PC-9 (cell line): ENCODE measurements at regions of chr5 and their contacts with region 1.

Region 1: DNA sequence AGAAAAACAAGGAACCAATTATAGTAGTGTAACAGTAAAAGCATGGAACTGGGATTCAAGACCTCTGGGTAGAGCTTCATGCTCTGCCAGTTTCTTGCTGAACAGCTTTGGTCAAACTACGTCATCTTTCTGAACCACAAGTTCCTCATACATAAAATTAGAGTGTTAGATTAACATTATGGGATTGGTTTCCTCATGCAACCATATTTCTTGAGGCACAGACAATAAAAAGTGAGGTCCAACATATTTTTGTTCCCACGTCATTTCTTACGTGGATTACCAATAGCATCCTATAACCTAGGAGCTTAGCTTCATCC is 354.8 kb downstream of the TMEM232 start:
- DNase-seq: no peak
- H3K4me3 ChIP-seq: no peak overlapping the region
- H3K27ac ChIP-seq: no peak overlapping the region
- H3K4me1 ChIP-seq: no peaks in the 10 kb centered on the region
- H3K27me3 ChIP-seq: no peaks in the 10 kb centered on the region
- CTCF ChIP-seq: no peak

Region 2: GRCh38 chr5:110304176-110304575 is 67.5 kb before region 1 on chr5:
- CTCF ChIA-PET with region 1: no interaction called
- POLR2A ChIA-PET with region 1: no interaction called
- intact Hi-C with region 1: loop called (anchors 2 kb)
- DNase-seq: no peak
- H3K4me3 ChIP-seq: no peak overlapping the region
- H3K27ac ChIP-seq: no peak overlapping the region
- H3K4me1 ChIP-seq: no peaks in the 10 kb centered on the region
- H3K27me3 ChIP-seq: no peaks in the 10 kb centered on the region
- CTCF ChIP-seq: no peak